Activated naive CD4-positive, alpha-beta T cell treated with anti-CD3 and anti-CD28 coated beads, Interleukin-2, amount 10 ng/mL, durations not matched to agents 7 days and 5 days (primary cell): ENCODE measurements at regions of chr12 and their contacts with region 1.

Region 1: DNA sequence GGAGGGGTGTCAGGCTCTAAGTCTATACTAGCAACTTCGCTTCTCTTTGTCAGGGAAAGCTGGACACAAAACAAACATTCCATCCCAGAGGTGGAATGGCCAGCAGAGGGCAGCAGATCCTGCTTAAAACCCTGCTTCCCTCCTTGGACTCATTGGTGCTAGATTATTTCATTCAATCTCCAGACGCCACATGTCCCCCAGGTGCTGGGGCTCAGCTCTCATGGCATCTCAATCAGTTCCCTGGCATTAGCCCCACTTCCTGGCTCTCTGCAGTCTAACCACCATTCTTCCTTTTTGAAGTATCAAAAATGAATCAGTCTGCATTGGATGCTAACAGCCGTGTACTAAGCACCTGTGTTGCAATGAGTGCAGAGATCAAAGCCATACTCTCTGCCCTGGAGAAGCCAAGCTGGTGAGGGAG is 8.1 kb upstream of the PPP1R1A start:
- DNase-seq: peak; percentile 68
- H3K4me3 Mint-ChIP-seq: no peak overlapping the region
- H3K27ac Mint-ChIP-seq: no peak overlapping the region
- H3K4me1 Mint-ChIP-seq: peaks cover 3% of the 10 kb centered on the region
- H3K27me3 Mint-ChIP-seq: peaks cover 51% of the 10 kb centered on the region

Region 2: DNA sequence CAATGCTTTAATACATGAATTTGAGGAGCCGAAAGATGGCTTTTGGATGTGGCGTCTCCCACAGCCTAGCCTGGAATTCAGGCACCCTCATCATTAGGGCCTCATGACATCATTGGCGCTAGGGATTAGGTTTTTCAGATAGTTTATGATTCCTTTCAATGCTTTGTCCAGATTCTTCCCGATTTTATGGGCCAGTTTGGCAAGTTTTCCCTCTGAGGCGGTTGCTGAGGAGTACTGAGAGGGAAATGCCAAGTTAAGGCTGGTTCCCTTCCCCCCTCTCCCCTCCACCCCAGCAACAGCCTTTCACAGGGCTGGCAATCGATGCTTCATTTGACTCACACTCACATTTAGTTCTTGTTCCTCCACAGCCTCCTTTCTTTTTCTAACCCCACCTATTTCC is 11.6 kb after region 1 on chr12:
- CTCF ChIA-PET with region 1: interaction called, 15 read pairs
- DNase-seq: no peak
- H3K4me3 Mint-ChIP-seq: no peak overlapping the region
- H3K27ac Mint-ChIP-seq: no peak overlapping the region
- H3K4me1 Mint-ChIP-seq: peaks cover 2% of the 10 kb centered on the region
- H3K27me3 Mint-ChIP-seq: peaks cover 39% of the 10 kb centered on the region